ENCODE measurements at regions of chr6 and their contacts with region 1.

Region 1: GRCh38 chr6:122471107-122472021 is at the start of gene SERINC1:
- DNase-seq: peak; percentile 88
- H3K4me3 Mint-ChIP-seq: peak within 1 kb of the TSS; percentile 99
- H3K27ac Mint-ChIP-seq: peak within 1 kb of the TSS; percentile 99
- H3K4me1 Mint-ChIP-seq: peaks cover 22% of the 10 kb centered on the region
- H3K27me3 Mint-ChIP-seq: no peaks in the 10 kb centered on the region
- total RNA-seq, gene SERINC1: 44.0 and 46.4 TPM in 2 replicates

Region 2: GRCh38 chr6:122393351-122393896 is 77.9 kb before region 1 on chr6:
- intact Hi-C with region 1: loop called (anchors 1 kb)
- DNase-seq: no peak
- H3K4me3 Mint-ChIP-seq: no peak overlapping the region
- H3K27ac Mint-ChIP-seq: no peak overlapping the region
- H3K4me1 Mint-ChIP-seq: peaks cover 10% of the 10 kb centered on the region
- H3K27me3 Mint-ChIP-seq: no peaks in the 10 kb centered on the region

Region 3: GRCh38 chr6:122530440-122531046 is 59.2 kb after region 1 on chr6:
- intact Hi-C with region 1: loop called (anchors 1 kb)
- DNase-seq: peak; percentile 31
- H3K4me3 Mint-ChIP-seq: no peak overlapping the region
- H3K27ac Mint-ChIP-seq: no peak overlapping the region
- H3K4me1 Mint-ChIP-seq: peaks cover 3% of the 10 kb centered on the region
- H3K27me3 Mint-ChIP-seq: peaks cover 23% of the 10 kb centered on the region

Region 4: GRCh38 chr6:122604676-122605075 is 133.3 kb after region 1 on chr6:
- intact Hi-C with region 1: no loop called
- DNase-seq: no peak
- H3K4me3 Mint-ChIP-seq: no peak overlapping the region
- H3K27ac Mint-ChIP-seq: no peak overlapping the region
- H3K4me1 Mint-ChIP-seq: peaks cover 3% of the 10 kb centered on the region
- H3K27me3 Mint-ChIP-seq: peaks cover 20% of the 10 kb centered on the region

Region 5: GRCh38 chr6:123242842-123243241 is 771.5 kb after region 1 on chr6:
- intact Hi-C with region 1: no loop called
- DNase-seq: no peak
- H3K4me3 Mint-ChIP-seq: no peak overlapping the region
- H3K27ac Mint-ChIP-seq: no peak overlapping the region
- H3K4me1 Mint-ChIP-seq: no peaks in the 10 kb centered on the region
- H3K27me3 Mint-ChIP-seq: no peaks in the 10 kb centered on the region